ENCODE measurements at regions of chr19 and their contacts with region 1.

Region 1: GRCh38 chr19:4815426-4816201 is 15.9 kb downstream of the TICAM1 start:
- DNase-seq: peak; percentile 74
- H3K4me3 ChIP-seq: no peak overlapping the region
- H3K27ac ChIP-seq: peak overlapping the region; percentile 21
- H3K27me3 ChIP-seq: no peaks in the 10 kb centered on the region
- CTCF ChIP-seq: no peak

Region 2: GRCh38 chr19:4803736-4804695 is 11.6 kb before region 1 on chr19:
- CTCF ChIA-PET with region 1: interaction called, 11 read pairs
- POLR2A ChIA-PET with region 1: interaction called, 6 read pairs
- DNase-seq: no peak
- H3K4me3 ChIP-seq: no peak overlapping the region
- H3K27ac ChIP-seq: no peak overlapping the region
- H3K27me3 ChIP-seq: no peaks in the 10 kb centered on the region
- CTCF ChIP-seq: peak; percentile 71

Region 3: DNA sequence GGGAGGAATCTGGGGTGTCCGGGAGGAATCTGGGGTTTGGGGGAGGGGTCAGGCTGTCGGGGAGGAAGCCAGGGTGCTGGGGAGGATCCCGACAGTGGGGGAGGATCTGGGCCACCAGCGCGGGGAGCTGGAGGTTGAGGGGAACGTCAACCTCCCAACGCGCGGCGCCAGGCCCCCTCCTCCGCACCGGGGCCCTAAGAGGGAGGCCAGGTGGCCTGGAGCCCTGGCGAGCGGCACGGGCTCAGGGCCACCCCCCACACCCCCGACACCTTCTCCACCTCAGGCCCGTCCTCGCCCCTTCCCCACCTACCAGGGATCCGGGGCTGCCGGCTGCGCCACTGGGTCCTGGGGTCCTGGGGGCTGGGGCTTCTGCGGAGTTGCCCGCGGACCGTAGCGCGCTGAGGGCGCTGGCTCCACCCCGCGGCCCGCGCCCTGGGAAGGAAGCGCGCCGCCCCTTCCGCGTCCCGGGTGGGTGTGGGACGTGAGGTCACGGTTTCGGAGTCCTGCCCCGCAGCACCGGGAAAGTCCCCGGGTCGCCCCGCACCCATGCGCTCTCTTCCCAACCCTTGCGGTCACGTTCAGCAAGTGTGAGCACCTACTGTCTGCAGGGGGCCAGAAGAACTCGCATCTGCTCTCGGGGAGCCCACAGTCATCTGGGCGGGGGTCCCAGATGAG is 15.8 kb after region 1 on chr19 and contains the start of gene TICAM1:
- CTCF ChIA-PET with region 1: interaction called, 11 read pairs
- POLR2A ChIA-PET with region 1: interaction called, 9 read pairs
- DNase-seq: no peak
- H3K4me3 ChIP-seq: peak within 1 kb of the TSS; percentile 84
- H3K27ac ChIP-seq: no peak within 1 kb of the TSS
- H3K27me3 ChIP-seq: no peaks in the 10 kb centered on the region
- CTCF ChIP-seq: no peak
- polyA plus RNA-seq, gene TICAM1: 1.0 and 2.9 TPM in 2 replicates

Region 4: GRCh38 chr19:4844348-4845179 is 28.9 kb after region 1 on chr19:
- CTCF ChIA-PET with region 1: interaction called, 109 read pairs
- POLR2A ChIA-PET with region 1: interaction called, 5 read pairs
- DNase-seq: no peak
- H3K4me3 ChIP-seq: no peak overlapping the region
- H3K27ac ChIP-seq: peak overlapping the region; percentile 40
- H3K27me3 ChIP-seq: no peaks in the 10 kb centered on the region
- CTCF ChIP-seq: no peak

Region 5: DNA sequence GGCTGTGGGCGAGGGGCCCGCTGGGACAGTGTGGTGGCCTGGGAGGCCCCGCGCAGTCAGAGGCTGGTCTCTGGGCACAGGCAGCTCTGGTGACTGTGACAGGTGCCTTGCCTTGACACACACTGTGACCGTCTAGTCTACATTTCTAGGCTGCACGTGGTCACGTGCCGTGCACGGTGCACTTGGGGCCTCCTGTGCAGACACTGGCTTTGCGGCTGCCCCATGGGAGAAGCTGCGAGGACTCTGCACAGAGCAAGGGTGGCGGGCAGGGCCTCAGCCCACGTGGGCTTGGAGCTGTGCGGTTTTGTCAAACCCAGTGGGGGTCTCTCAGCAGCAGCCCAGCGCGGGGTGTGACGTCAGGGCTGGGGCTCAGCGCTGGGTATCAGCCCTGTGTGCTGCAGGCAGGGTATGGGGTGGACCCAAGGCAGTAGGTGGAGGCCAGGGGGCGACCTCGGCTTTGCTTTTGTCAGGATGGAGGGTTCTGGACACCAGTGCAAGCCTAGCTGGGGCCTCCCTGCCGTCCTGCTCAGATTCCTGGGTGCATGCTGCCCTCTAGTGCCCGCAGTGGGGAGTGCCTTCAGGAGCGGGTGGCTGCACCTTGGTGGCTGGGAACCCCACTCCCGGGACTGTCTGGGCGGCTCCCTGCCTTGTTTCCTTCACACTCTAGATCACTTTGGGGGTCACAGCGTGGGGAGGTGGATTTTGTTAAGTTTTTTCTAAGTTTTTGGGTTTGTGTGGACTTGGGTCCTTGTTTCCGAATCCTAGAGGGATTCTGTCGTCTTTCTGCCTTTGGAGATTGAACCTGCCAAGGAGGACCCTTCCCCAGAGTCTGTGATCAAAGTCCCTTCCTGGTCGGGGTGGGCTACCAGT is 215.9 kb after region 1 on chr19:
- CTCF ChIA-PET with region 1: interaction called, 40 read pairs
- POLR2A ChIA-PET with region 1: no interaction called
- DNase-seq: no peak
- H3K4me3 ChIP-seq: no peak overlapping the region
- H3K27ac ChIP-seq: no peak overlapping the region
- H3K27me3 ChIP-seq: no peaks in the 10 kb centered on the region
- CTCF ChIP-seq: peak; percentile 95

Measured in AG04450 (cell line).